Naive thymus-derived CD4-positive, alpha-beta T cell (primary cell): ENCODE measurements at regions of chr19 and their contacts with region 1.

Region 1: GRCh38 chr19:52527134-52527955 is at the start of gene ZNF808:
- DNase-seq: peak; percentile 79 to 95 (median 90)
- ATAC-seq: peak; percentile 99
- H3K4me3 ChIP-seq: peak within 1 kb of the TSS; percentile 99
- H3K4me3 Mint-ChIP-seq: peak within 1 kb of the TSS; percentile 91 to 100 (median 98)
- H3K27ac ChIP-seq: peak within 1 kb of the TSS; percentile 91
- H3K27ac Mint-ChIP-seq: peak within 1 kb of the TSS; percentile 84 to 99 (median 98)
- H3K4me1 ChIP-seq: peaks cover 9 to 12% of the 10 kb centered on the region in 2 donors
- H3K4me1 Mint-ChIP-seq: peaks cover 18 to 34% (median 25%) of the 10 kb centered on the region in 7 donors
- H3K27me3 ChIP-seq: no peaks in the 10 kb centered on the region
- H3K27me3 Mint-ChIP-seq: no peaks in the 10 kb centered on the region
- total RNA-seq, gene ZNF808: 17.7 to 52.4 (median 33.7) TPM

Region 2: GRCh38 chr19:52171321-52172169 is 355.8 kb before region 1 on chr19 and contains the start of gene ZNF836:
- CTCF ChIA-PET with region 1: no interaction called
- POLR2A ChIA-PET with region 1: no interaction called
- intact Hi-C with region 1: loop called in 1 of 2 experiments (anchors 2 kb)
- DNase-seq: peak; percentile 72 to 95 (median 91)
- ATAC-seq: peak; percentile 98
- H3K4me3 ChIP-seq: peak within 1 kb of the TSS; percentile 92
- H3K4me3 Mint-ChIP-seq: peak within 1 kb of the TSS; percentile 92 to 98 (median 96)
- H3K27ac ChIP-seq: peak within 1 kb of the TSS; percentile 92
- H3K27ac Mint-ChIP-seq: peak within 1 kb of the TSS; percentile 96 to 99 (median 98)
- H3K4me1 ChIP-seq: peaks cover 18 to 19% of the 10 kb centered on the region in 2 donors
- H3K4me1 Mint-ChIP-seq: peaks cover 23 to 48% (median 45%) of the 10 kb centered on the region in 7 donors
- H3K27me3 ChIP-seq: no peaks in the 10 kb centered on the region
- H3K27me3 Mint-ChIP-seq: no peaks in the 10 kb centered on the region
- total RNA-seq, gene ZNF836: 20.1 to 57.5 (median 27.4) TPM

Region 3: DNA sequence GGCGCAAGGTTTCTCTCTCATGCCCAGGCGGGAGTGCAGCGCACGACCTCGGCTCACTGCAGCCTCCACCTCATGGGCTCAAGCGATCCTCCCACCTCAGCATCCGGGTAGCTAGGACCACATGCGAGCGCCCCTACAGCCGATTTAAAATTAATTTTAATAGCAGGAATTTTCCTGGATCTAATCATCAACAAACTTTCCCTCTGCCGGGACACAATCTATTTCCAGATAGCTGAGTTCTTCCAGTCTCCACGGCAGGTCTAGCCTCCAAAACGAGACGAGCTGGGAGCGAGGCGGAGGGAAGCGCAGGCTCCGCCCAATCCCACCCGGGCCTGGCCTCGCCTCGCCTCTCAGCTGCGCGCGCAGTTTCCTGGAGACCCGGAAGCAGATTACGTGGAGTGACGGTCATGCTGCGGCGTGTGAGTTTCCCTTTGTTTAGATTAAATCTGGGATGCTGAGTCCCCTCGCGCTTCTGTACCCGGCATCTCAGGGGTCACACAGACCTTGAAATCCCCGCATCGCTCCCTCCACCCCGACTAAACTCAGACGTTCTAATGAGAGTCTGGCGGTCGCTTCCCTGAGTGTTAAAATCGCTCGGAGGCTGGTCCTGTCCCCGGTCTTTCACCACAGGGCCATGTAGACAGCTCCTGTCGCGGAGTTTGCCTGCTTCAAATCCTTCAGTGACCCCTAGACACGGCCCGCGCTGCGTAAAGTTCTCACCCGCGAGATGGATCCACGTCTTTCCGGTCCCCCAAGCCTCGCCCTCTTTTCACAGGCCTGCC is 157.6 kb before region 1 on chr19 and contains the start of gene ZNF880:
- CTCF ChIA-PET with region 1: interaction called, 3 read pairs
- POLR2A ChIA-PET with region 1: interaction called, 4 read pairs
- intact Hi-C with region 1: loop called in 1 of 2 experiments (anchors 1 kb)
- DNase-seq: peak; percentile 81 to 92 (median 88)
- ATAC-seq: peak; percentile 97
- H3K4me3 ChIP-seq: peak within 1 kb of the TSS; percentile 100
- H3K4me3 Mint-ChIP-seq: peak within 1 kb of the TSS; percentile 90 to 98 (median 94)
- H3K27ac ChIP-seq: peak within 1 kb of the TSS; percentile 92
- H3K27ac Mint-ChIP-seq: peak within 1 kb of the TSS; percentile 96 to 99 (median 98)
- H3K4me1 ChIP-seq: peaks cover 4 to 5% of the 10 kb centered on the region in 2 donors
- H3K4me1 Mint-ChIP-seq: peaks cover 2 to 19% (median 17%) of the 10 kb centered on the region in 7 donors
- H3K27me3 ChIP-seq: no peaks in the 10 kb centered on the region
- H3K27me3 Mint-ChIP-seq: no peaks in the 10 kb centered on the region
- total RNA-seq, gene ZNF880: 10.3 to 33.5 (median 25.4) TPM

Region 4: DNA sequence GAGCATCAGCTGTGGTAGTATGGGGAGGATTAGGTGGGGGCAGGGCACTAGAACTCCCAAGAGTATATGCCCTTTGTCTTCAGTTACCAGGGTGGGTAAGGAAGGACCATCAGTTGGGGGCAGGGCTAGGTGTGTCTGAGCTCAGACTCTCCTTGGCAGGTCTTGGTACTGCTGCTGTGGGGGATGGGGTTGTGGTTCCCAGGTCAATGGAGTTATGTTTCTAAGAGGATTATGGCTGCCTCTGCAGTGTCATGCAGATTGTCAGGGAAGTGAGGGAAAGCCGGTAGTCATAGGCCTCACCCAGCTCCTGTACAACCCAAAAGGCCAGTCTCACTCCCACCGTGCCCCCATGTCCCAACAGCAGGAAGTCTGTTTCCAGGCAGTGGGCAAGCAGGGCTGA is 82.8 kb before region 1 on chr19:
- CTCF ChIA-PET with region 1: no interaction called
- POLR2A ChIA-PET with region 1: no interaction called
- intact Hi-C with region 1: no loop called
- DNase-seq: no peak
- ATAC-seq: no peak
- H3K4me3 ChIP-seq: no peak overlapping the region
- H3K4me3 Mint-ChIP-seq: no peak overlapping the region
- H3K27ac ChIP-seq: no peak overlapping the region
- H3K27ac Mint-ChIP-seq: no peak overlapping the region
- H3K4me1 ChIP-seq: no peaks in the 10 kb centered on the region
- H3K4me1 Mint-ChIP-seq: no peaks in the 10 kb centered on the region
- H3K27me3 ChIP-seq: no peaks in the 10 kb centered on the region
- H3K27me3 Mint-ChIP-seq: peaks cover 0 to 8% (median 7%) of the 10 kb centered on the region in 5 donors

Region 5: GRCh38 chr19:52570000-52570861 is 42.9 kb after region 1 on chr19 and contains the start of gene ZNF701:
- CTCF ChIA-PET with region 1: no interaction called
- POLR2A ChIA-PET with region 1: no interaction called
- intact Hi-C with region 1: loop called (anchors 1 kb)
- DNase-seq: peak; percentile 92 to 99 (median 96)
- ATAC-seq: peak; percentile 100
- H3K4me3 ChIP-seq: peak within 1 kb of the TSS; percentile 78
- H3K4me3 Mint-ChIP-seq: peak within 1 kb of the TSS; percentile 88 to 99 (median 94)
- H3K27ac ChIP-seq: peak within 1 kb of the TSS; percentile 78
- H3K27ac Mint-ChIP-seq: peak within 1 kb of the TSS; percentile 92 to 98 (median 95)
- H3K4me1 ChIP-seq: peaks cover 10 to 13% of the 10 kb centered on the region in 2 donors
- H3K4me1 Mint-ChIP-seq: peaks cover 9 to 42% (median 37%) of the 10 kb centered on the region in 7 donors
- H3K27me3 ChIP-seq: no peaks in the 10 kb centered on the region
- H3K27me3 Mint-ChIP-seq: no peaks in the 10 kb centered on the region
- total RNA-seq, gene ZNF701: 11.7 to 43.3 (median 28.3) TPM

Region 6: GRCh38 chr19:52690369-52691214 is 163.2 kb after region 1 on chr19:
- CTCF ChIA-PET with region 1: no interaction called
- POLR2A ChIA-PET with region 1: no interaction called
- intact Hi-C with region 1: loop called (anchors 1 to 2 kb)
- DNase-seq: peak; percentile 81 to 91 (median 87)
- ATAC-seq: peak; percentile 99
- H3K4me3 ChIP-seq: peak overlapping the region; percentile 80
- H3K4me3 Mint-ChIP-seq: peak overlapping the region; percentile 92 to 99 (median 96)
- H3K27ac ChIP-seq: peak overlapping the region; percentile 85
- H3K27ac Mint-ChIP-seq: peak overlapping the region; percentile 89 to 97 (median 94)
- H3K4me1 ChIP-seq: peaks cover 6 to 9% of the 10 kb centered on the region in 2 donors
- H3K4me1 Mint-ChIP-seq: peaks cover 18 to 33% (median 30%) of the 10 kb centered on the region in 7 donors
- H3K27me3 ChIP-seq: no peaks in the 10 kb centered on the region
- H3K27me3 Mint-ChIP-seq: no peaks in the 10 kb centered on the region